ENCODE measurements at regions of chr16 and their contacts with region 1.

Region 1: DNA sequence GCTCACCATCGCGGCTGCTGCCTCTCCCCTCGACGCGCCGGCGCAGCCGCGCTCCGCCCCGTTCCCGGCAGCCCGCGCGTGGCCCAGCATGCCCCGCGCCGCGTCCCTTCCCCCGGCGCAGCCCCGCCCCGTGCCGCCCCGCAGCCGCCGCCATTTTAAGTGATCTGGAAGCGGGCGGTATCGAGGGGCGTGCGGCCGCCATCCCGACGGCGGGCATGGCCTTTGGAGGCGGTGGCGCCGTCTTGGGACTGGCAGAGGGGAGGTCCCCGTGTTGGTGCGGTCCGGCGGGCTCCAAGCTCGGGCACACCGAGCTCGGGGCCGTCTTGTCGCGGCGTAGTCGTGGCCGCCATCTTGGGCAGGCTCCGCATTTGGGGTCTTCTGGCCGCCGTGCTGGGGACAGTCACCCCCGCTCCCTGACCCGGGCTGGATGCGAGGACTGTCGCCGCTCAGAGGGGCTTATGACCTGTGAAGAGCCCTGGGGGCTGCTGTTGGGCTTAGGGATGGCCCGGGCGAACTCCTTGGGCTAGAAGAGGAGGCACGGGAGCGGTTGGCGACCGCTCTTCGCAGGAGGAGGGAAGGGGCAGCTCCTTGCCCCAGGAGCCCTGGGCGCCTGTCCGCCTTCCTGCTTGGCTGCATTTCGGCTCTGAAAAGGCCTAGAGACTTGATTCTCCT is at the start of gene ELOB:
- DNase-seq: peak; percentile 99
- H3K4me3 ChIP-seq: peak within 1 kb of the TSS; percentile 88 to 91
- H3K27ac ChIP-seq: peak within 1 kb of the TSS; percentile 94 to 97
- H3K4me1 ChIP-seq: peaks cover 11 to 25% of the 10 kb centered on the region in 2 experiments; a peak in 2 of 4 replicates
- H3K27me3 ChIP-seq: no peaks in the 10 kb centered on the region
- CTCF ChIP-seq: no peak
- EP300 ChIP-seq: no peak
- RAD21 ChIP-seq: no peak
- polyA plus RNA-seq, gene ELOB: 327 and 329 TPM in 2 replicates

Region 2: DNA sequence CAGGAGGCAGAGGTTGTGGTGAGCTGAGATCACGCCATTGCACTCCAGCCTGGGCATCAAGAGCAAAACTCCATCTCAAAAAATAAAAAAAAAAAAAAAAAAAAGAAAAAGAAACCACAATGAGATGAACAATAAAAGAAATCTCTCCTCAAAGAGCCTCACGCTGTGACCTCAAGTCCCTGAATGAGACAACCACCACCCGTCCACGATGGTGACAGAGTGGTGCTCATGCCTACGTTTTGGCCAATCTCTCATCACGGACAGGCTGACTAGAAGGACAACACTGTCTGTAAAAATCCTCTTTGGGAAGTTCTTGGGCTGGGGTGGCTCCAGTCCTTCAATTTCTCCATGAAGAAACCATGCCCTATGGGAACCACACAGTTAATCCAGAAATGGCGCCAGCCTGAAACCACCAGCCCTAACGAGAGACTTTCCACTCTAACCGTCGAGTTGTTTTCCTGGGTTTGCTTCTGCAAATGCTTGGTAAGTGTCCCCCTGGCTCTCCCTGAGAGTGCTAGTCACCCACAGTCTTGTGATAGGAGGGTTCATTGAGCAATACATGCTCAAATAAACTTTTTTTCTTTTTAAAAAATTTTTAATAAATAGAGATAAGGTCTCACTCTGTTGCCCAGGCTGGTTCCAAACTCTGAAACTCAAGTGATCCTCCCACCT is 42.4 kb before region 1 on chr16:
- CTCF ChIA-PET with region 1: no interaction called
- POLR2A ChIA-PET with region 1: no interaction called
- DNase-seq: no peak
- H3K4me3 ChIP-seq: no peak overlapping the region
- H3K27ac ChIP-seq: no peak overlapping the region
- H3K4me1 ChIP-seq: no peaks in the 10 kb centered on the region; a peak in 1 of 4 replicates
- H3K27me3 ChIP-seq: no peaks in the 10 kb centered on the region
- CTCF ChIP-seq: no peak
- EP300 ChIP-seq: no peak
- RAD21 ChIP-seq: no peak

Region 3: DNA sequence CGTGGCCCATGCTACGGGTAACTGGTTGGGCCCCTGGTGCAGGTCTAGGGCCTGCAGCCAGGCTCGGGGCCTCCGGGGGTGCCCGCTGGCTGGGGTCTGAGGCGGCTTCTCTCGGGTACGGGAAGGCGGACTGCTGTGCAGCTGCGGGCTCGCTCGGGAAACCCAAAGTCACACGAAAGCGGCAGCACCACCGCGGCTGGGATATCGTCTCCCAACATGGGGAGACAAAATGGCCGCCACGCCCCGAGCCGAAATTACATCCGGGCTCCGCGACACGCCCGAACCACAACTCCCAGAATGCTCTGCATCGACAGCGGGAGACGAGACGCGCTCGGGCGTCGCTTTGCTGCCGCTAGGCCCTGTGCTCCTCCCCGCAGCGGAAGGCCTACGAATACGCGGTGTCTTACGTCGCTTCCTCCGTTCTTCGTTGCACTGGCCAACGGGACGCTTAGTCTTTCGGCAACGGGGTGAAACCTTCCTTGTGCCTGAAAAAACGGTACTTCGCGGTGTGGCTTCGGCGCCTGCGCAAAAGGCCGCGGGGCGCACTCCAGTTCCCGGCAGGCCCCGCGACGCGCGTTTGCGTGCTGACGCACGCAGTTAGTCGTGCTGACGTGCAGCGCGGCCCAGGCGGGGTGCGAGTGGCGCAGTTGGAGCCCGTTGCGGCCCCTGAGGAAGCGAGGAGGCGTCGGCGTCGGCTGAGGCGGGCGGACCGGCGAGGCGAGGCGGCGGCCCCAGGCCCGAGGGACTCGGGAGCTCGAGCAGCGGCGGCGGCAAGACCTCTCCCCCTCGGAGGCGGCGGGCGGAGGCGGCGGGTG is 25.1 kb before region 1 on chr16 and contains the start of gene SRRM2:
- CTCF ChIA-PET with region 1: interaction called, 3 read pairs
- POLR2A ChIA-PET with region 1: interaction called, 19 read pairs
- DNase-seq: peak; percentile 95
- H3K4me3 ChIP-seq: peak within 1 kb of the TSS; percentile 76 to 98
- H3K27ac ChIP-seq: peak within 1 kb of the TSS; percentile 99 to 100
- H3K4me1 ChIP-seq: peaks cover 12 to 20% of the 10 kb centered on the region in 2 experiments; a peak in 3 of 4 replicates
- H3K27me3 ChIP-seq: no peaks in the 10 kb centered on the region
- CTCF ChIP-seq: no peak
- EP300 ChIP-seq: no peak
- RAD21 ChIP-seq: no peak
- polyA plus RNA-seq, gene SRRM2: 100 and 143 TPM in 2 replicates

Region 4: DNA sequence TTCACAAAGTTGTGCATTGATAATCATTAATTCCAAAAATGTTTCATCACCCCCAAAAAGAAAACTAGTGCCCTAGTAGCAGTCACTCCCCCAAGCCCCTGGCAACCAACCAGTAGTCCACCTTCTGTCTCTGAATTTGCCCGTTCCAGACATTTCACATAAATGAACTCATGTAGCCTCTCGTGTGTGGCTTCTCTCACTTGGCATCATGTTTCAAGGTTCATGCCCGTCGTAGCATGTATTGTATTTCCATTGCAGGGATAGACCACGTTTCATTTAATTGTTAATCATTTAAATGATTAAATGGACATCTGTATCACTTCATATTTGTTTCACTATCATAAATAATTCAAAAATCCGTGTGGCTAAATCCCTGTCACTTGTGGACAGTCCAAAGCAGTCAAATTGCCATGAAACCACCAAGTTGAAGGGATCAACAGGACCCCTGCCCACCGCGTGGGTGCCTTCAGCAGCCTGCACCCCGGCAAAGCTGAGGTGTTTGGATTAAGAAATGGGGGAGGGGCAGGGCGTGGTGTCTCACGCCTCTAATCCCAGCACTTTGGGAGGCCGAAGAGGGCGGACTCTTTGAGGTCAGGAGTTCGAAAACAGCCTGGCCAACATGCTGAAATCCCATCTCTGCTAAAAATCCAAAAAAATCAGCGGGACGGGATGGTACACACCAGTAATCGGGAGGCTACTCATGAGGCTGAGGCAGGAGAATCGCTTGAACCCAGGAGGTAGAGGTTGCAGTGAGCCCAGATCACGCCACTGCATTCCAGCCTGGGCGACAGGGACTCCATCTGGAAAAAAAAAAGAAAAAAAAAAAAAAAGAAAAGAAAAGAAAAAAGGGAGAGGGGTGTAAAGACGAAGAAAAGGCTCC is 96.9 kb after region 1 on chr16:
- CTCF ChIA-PET with region 1: no interaction called
- POLR2A ChIA-PET with region 1: no interaction called
- DNase-seq: no peak
- H3K4me3 ChIP-seq: peak overlapping the region in 1 of 2 experiments; percentile 32; a peak in 1 of 4 replicates
- H3K27ac ChIP-seq: no peak overlapping the region
- H3K4me1 ChIP-seq: no peaks in the 10 kb centered on the region
- H3K27me3 ChIP-seq: no peaks in the 10 kb centered on the region
- CTCF ChIP-seq: no peak
- EP300 ChIP-seq: no peak
- RAD21 ChIP-seq: no peak

Measured in SK-N-SH (cell line).